BJ (cell line): ENCODE measurements at regions of chr15 and their contacts with region 1.

Region 1: GRCh38 chr15:89358755-89359439 is 24.3 kb upstream of the POLG start:
- DNase-seq: peak; percentile 6
- H3K4me3 ChIP-seq: peak overlapping the region; percentile 45
- H3K27me3 ChIP-seq: peaks cover 67% of the 10 kb centered on the region
- CTCF ChIP-seq: peak; percentile 91

Region 2: DNA sequence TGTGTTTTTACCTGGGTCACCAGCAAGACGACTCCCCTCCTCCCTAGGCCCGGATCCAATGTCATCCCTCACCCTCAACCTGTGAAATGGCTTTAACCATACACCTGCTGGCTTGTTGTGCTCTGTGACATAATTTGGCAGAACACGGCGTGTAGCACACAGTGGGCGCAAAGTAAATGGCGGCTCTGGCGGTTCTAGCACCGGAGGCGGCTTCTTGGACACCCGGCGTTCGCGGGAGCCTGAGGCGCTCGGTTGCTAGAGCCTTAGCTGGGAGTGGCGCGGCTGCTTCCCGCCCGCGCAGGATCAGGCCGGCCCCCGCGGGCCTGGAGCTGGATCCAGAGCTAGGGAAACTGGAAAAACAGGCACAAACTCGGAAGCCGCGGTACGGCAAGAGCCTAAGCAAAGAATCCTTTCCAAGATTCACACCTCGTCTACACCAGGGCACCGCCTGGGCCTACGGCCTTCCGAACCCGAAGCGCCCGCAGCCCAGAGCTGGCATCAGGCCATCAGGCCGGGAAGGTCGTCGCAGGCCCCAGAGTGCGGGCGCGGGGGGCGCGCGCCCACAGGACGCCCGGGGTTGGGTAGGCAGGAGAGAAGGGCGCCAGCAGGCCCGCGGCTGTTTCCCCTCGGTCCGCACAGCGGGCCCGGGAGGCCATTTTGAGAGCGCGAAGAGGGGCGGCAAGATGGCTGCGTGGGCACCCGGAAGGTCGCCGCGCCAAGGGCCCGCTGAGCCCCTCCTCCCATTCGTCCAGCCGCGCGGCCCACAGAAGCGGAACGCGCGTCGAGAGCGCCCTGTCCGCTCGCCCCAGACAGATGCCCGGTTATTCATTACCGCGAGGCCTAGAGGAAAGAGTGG is 19.6 kb after region 1 on chr15:
- CTCF ChIA-PET with region 1: interaction called, 68 read pairs
- POLR2A ChIA-PET with region 1: no interaction called
- DNase-seq: no peak
- H3K4me3 ChIP-seq: no peak overlapping the region; the same call in 1 of the 2 replicates
- H3K27me3 ChIP-seq: peaks cover 69% of the 10 kb centered on the region
- CTCF ChIP-seq: no peak

Region 3: DNA sequence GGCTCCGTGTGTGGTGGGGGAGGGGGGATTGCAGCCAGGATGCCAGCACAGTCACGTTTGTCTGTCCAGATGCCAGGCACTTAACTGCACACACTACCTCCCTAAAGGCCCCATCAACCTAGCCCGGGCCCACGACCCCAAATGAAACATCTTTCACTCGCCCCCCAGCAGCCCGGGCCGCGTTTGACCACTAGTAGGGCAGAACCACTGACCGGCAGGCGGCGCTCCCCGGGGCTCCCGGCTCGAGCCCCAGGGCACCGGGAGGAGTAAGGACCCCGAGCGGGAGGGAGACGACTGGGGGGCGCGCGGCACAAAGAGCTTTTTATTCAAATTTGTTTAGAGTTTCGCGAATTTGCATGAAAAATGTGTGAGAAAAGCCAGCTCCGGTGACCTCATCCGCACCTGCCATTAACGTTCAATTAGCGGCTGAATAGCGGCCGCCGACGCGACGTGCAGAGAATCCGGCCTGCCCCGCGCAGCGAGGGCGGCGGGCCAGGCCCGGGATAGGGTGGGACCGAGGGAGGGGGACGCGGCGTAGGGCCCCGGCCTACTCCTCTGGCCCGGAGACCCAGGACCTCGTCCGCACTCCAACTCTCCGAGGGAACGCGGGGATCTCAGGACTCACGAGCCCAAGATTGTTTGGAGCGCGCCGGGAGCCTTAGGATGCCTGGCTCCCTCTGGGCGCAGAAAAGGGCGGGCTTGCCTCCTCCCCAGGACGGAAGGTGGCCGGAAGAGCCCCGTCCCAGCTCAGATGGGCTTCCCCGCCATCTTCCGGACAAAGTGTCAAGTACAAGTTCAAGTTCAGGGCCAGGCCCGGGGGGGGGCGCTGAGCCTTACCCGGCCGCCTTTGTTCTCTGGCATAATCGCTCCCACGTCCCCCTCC is 40.6 kb after region 1 on chr15:
- CTCF ChIA-PET with region 1: interaction called, 38 read pairs
- POLR2A ChIA-PET with region 1: no interaction called
- DNase-seq: no peak
- H3K4me3 ChIP-seq: peak overlapping the region; percentile 28
- H3K27me3 ChIP-seq: peaks cover 57% of the 10 kb centered on the region
- CTCF ChIP-seq: peak; percentile 61

Region 4: DNA sequence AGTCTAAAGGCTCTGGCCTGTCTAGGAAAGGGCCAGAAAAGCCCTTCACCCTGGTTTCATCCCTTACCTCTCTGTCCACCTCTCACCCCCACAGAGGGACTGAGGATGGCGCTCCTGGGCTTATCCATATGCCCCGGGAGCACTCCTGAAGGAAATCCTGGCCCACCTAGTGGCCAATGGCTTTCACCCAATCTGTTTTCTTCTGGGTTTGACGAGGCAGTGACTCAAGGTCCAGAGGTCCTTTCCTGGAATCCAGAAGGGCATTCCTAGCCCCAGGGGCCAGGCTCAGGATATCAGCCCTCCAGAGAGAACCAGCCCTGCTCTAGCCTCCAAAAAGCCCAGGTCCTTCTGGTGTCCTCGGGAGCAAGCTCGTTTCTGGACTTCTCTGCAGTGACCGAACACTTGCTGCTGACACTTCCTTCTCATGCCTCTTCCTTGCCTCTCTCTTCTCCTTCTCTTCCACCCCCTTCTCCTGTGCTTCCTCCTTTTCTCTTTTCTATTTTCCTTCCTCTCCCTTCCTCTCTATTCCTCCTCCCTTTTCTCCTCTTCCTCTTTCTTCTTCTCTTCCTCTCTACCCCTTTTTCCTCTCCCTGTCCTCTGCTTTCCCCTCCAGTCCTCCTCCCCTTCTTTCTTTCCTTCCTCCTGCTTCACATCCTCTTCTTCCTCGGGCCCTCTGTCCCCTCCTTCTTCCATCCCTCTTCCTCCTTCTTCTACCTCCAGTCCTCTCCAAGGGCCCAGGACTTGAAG is 77.8 kb after region 1 on chr15:
- CTCF ChIA-PET with region 1: interaction called, 89 read pairs
- POLR2A ChIA-PET with region 1: no interaction called
- DNase-seq: no peak
- H3K4me3 ChIP-seq: no peak overlapping the region
- H3K27me3 ChIP-seq: peaks cover 30% of the 10 kb centered on the region
- CTCF ChIP-seq: no peak

Region 5: DNA sequence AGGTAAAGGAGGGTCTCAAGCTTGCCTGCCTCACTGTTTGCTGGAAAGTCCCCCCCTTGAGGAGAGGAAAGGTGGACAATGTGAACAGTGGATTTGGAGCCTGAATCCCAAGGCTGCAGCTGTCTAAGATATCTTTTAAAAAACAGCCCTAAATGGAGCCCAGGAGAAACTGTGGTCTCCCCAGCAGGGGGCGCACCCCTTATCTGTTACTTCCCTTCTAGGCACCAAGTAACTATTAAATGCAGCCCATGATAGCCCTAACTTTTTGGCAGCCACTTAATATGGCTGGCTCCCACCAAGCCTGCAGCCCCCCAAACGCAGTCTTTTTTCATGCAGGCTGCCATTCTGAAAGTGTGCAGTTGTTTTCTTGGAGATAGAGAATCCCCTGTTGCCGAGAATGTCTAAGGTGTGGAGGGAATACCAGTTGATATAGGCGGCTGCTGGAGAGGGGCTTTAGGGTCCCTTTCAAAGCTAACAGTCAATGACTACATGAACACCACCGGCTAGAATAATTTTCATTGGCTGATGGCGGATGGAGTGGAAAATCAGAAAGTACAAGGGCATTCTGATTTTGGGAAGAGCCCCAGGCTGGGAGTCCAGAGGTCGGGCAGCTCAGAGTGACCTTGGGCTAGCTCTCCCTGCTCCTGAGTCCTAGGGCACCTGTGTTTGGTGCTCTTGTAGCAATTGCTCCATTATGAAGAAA is 136.2 kb after region 1 on chr15:
- CTCF ChIA-PET with region 1: interaction called, 10 read pairs
- POLR2A ChIA-PET with region 1: no interaction called
- DNase-seq: no peak
- H3K4me3 ChIP-seq: no peak overlapping the region
- H3K27me3 ChIP-seq: peaks cover 36% of the 10 kb centered on the region
- CTCF ChIP-seq: peak; percentile 52